ENCODE measurements at regions of chr20 and their contacts with region 1.

Region 1: GRCh38 chr20:6099819-6100218 is 23.0 kb downstream of the FERMT1 start:
- DNase-seq: no peak
- H3K4me3 ChIP-seq: no peak overlapping the region
- H3K27ac ChIP-seq: no peak overlapping the region
- H3K4me1 ChIP-seq: no peaks in the 10 kb centered on the region
- H3K27me3 ChIP-seq: no peaks in the 10 kb centered on the region
- CTCF ChIP-seq: no peak

Region 2: GRCh38 chr20:5642155-5642981 is 457.5 kb before region 1 on chr20:
- CTCF ChIA-PET with region 1: no interaction called
- POLR2A ChIA-PET with region 1: no interaction called
- intact Hi-C with region 1: no loop called
- DNase-seq: peak; percentile 55
- H3K4me3 ChIP-seq: no peak overlapping the region
- H3K27ac ChIP-seq: no peak overlapping the region
- H3K4me1 ChIP-seq: peaks cover 5% of the 10 kb centered on the region
- H3K27me3 ChIP-seq: no peaks in the 10 kb centered on the region
- CTCF ChIP-seq: no peak

Region 3: GRCh38 chr20:7449269-7449668 is 1349.5 kb after region 1 on chr20:
- CTCF ChIA-PET with region 1: no interaction called
- POLR2A ChIA-PET with region 1: interaction called, 11 read pairs
- intact Hi-C with region 1: no loop called
- DNase-seq: no peak
- H3K4me3 ChIP-seq: no peak overlapping the region
- H3K27ac ChIP-seq: no peak overlapping the region
- H3K4me1 ChIP-seq: no peaks in the 10 kb centered on the region
- H3K27me3 ChIP-seq: no peaks in the 10 kb centered on the region
- CTCF ChIP-seq: no peak

Measured in A673 (cell line).